Sciatic nerve (tissue), 2 donors: ENCODE measurements at regions of chr16 and their contacts with region 1.

Region 1: DNA sequence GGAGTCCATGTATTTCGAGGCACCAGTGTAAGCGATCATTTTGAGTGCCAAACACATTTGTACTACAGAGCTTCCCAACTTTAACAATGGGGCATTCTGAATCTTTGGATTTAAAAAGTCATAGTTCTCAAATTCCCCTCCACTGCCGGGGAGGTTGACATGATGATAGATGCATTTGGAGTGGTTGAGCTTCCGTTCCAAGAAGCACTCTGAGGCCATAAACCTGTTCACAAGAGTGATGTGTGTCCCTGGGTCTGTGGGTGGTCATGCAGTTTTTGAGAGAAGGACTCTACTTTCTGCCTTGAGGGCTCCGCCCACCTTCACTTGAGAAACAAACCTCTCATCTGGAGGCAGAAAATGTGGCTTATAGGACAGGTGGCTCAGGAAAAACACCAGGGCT is 43.7 kb downstream of the IRX5 start:
- DNase-seq: no peak
- ATAC-seq: no peak

Region 2: GRCh38 chr16:55018881-55019280 is 44.5 kb after region 1 on chr16:
- intact Hi-C with region 1: loop called (anchors 1 kb)
- DNase-seq: no peak
- ATAC-seq: no peak